GM13977 (cell line): ENCODE measurements at regions of chr7 and their contacts with region 1.

Region 1: DNA sequence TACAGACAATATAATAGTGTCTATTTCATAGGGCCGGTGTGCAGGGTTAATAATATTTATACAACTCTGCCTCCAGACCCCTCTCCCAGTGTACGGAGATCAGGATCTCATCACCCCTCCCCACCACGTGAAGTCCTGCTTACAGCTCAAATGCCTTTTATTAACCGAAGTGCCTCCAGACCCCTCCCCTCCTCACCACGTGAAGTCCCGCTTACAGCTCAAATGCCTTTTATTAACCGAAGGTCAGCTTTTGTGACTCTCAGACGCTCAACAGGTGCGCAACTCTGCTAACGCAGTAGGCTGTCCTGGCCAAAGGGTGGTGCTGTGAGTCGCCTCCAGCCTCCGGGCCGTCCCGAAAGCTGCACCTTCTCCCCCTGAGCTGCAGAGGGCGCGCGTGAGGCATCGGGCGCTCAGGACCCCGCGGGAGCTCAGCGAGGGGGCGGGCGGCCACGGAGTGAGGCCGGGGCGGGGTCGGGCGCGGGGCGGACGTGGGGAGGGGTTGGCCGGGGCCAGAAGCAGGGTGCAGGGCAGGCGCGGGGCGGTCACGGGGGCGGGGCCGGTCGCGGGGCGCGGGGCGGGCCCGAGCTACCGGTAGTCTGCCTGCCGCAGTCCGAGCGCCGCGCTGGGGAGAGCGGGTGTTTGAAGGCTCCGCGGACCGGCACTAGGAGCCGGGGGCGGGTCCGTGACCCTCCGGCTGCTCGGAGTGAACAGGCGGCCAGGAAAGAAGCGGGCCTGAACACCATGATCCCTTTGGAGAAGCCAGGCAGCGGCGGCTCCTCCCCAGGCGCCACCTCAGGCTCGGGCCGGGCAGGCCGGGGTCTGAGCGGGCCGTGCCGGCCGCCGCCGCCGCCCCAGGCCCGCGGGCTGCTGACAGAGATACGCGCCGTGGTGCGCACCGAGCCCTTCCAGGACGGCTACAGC is at the start of gene STK17A:
- DNase-seq: peak; percentile 93
- CTCF ChIP-seq: peak; percentile 100

Region 2: GRCh38 chr7:43693687-43694398 is 111.1 kb after region 1 on chr7:
- in situ Hi-C with region 1: loop called (anchors 10 kb)
- DNase-seq: no peak
- CTCF ChIP-seq: no peak

Region 3: DNA sequence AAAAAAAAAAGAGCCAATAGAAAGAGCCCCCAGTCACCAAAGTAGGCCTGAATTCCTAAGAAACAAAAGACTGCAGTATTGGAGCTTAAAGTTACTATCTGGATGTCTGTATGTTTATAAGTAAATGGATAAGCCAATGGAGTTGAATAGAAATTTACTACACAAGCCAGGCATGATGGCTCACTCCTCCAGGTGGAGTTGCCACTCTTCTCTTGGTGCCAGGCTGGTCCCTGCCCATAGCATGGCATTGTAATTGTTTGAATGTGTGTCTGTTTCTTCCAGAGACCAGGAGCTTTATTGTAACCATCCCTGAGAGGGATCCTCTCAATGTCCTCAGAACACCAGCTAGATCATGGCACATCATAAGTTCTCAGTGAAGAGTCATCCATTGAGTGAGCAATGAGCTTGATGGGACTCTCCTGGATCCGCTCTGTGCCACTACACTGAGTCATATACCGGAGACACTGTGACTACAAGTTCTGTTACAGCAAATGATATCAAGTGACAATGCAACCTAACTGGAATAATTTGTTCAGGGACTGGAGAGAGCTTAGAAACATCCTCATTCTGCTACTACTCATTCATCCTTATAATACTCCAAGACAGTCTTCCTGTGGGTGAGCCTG is 261.4 kb after region 1 on chr7:
- in situ Hi-C with region 1: loop called (anchors 5 kb)
- DNase-seq: no peak
- CTCF ChIP-seq: no peak

Region 4: GRCh38 chr7:44375236-44375699 is 792.5 kb after region 1 on chr7:
- in situ Hi-C with region 1: no loop called
- DNase-seq: no peak
- CTCF ChIP-seq: peak; percentile 44